Left cardiac atrium (tissue), 4 donors: ENCODE measurements at regions of chr1 and their contacts with region 1.

Region 1: DNA sequence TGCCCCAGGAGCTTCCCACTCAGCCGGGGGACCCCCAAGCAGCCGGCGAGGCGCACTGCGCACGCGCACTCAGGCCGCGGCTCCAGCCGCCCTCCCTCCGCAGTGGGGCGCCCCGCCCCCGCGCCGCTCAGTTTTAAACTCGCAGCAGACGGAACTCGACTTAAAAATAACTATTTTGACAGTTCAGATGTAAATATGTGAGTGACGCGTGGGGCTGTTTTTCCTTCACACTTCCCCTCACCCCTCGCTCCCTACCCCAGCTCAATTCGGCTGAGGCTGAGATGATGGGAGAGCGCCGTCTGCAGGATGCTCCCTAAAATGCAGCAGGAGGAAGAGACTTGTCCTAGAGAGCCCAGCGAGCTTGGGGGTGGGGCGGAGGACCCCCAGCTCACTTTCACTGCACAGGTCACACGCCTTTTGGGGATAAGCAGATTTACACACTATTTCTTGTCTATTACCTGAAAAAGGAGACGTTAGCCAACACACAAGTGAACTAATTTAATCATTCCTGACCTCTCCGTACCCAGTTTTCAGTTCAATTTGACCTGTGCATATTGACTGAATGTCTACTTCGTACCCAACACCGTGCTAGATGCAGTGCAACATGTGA is 8.9 kb upstream of the LEMD1 start:
- DNase-seq: peak; percentile 59
- ATAC-seq: peak; percentile 77 to 81

Region 2: GRCh38 chr1:205032508-205032907 is 398.3 kb before region 1 on chr1:
- intact Hi-C with region 1: no loop called
- DNase-seq: no peak
- ATAC-seq: no peak

Region 3: GRCh38 chr1:205375835-205376545 is 54.8 kb before region 1 on chr1:
- intact Hi-C with region 1: no loop called
- DNase-seq: no peak
- ATAC-seq: peak; percentile 61 to 72

Region 4: GRCh38 chr1:205396967-205397616 is 33.7 kb before region 1 on chr1:
- intact Hi-C with region 1: loop called (anchors 2 to 5 kb)
- DNase-seq: no peak
- ATAC-seq: peak; percentile 57 to 61

Region 5: DNA sequence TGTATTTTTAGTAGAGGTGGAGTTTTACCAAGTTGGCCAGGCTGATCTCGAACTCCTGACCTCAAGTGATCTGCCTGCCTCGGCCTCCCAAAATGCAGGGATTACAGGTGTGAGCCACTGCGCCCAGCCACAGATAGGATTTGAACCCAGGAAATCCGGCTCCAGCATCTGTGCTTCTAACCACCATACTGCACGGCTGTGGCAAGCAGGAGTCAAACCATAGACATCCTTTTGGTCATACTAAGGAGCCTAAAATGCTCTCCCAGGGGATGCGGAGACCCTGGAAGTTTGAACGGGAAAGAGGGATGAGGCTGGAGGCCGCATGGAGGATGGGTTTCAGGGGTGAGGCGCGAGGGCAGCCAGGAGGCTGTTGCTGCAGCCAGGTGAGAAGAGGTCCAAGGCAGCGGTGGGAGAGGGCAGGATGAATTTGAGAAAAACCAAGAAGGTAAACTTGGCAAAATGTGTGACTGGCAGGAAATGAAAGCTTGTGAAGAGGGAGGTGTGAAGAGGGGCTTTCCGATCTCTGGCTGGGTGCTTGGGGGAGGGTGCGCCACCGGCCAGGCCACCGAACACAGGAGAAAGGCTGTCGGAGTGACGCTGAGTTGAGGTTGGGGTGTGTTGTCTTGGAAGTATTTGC is 49.7 kb after region 1 on chr1:
- intact Hi-C with region 1: loop called in 1 of 2 experiments (anchors 5 kb)
- DNase-seq: no peak
- ATAC-seq: no peak